Heart right ventricle (tissue), 16 donors: ENCODE measurements at regions of chr3 and their contacts with region 1.

Region 1: GRCh38 chr3:10224784-10225665 is 23.2 kb upstream of the TATDN2 start:
- DNase-seq: peak; percentile 53 to 74
- ATAC-seq: peak; percentile 72 to 93 (median 86)
- H3K4me3 ChIP-seq: no peak overlapping the region
- H3K27ac ChIP-seq: peak overlapping the region in 2 of 10 donors; percentile 20 to 42
- H3K4me1 ChIP-seq: peaks cover 0 to 54% (median 6%) of the 10 kb centered on the region in 9 donors
- H3K27me3 ChIP-seq: no peaks in the 10 kb centered on the region
- CTCF ChIP-seq: peak; percentile 62 to 86 (median 84)

Region 2: DNA sequence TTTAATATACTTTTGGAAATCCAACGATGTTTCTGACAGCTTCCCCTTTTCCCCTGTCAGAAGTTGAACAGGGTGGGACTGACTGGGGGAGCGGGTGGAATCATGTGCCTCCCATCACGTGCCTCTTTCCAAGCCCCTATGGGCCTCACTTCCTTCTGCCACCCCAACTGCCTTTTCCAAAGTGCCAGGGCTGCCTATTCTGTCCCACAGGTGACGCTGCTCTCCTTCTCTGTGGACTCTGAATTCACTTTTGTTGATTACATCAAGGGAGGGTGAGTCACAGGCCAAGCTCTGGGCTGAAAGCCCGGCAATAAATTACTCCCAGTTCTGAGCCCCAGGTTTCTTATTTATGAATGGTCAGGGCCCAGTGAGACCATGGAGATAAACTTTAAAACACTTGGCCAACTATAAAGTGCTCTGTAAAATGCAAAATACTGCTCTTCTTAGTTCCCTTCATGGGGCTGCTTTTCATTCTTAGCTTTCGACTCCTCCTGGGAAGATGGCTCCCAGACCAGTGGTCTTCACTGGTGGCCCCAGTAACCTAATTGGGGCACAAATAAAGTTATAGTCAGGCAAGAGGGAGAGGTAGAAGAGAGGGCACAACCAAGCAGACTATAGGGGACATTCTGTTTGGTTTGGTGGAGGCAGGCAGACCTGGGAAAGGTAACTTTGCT is 509.1 kb before region 1 on chr3:
- intact Hi-C with region 1: loop called in 1 of 10 experiments (anchors 10 kb)
- DNase-seq: peak; percentile 46 to 70
- ATAC-seq: peak; percentile 90 to 96 (median 92)
- H3K4me3 ChIP-seq: no peak overlapping the region
- H3K27ac ChIP-seq: peak overlapping the region in 2 of 10 donors; percentile 18 to 55
- H3K4me1 ChIP-seq: peaks cover 0 to 19% (median 0%) of the 10 kb centered on the region in 9 donors
- H3K27me3 ChIP-seq: no peaks in the 10 kb centered on the region
- CTCF ChIP-seq: peak; percentile 14 to 76 (median 57)

Region 3: DNA sequence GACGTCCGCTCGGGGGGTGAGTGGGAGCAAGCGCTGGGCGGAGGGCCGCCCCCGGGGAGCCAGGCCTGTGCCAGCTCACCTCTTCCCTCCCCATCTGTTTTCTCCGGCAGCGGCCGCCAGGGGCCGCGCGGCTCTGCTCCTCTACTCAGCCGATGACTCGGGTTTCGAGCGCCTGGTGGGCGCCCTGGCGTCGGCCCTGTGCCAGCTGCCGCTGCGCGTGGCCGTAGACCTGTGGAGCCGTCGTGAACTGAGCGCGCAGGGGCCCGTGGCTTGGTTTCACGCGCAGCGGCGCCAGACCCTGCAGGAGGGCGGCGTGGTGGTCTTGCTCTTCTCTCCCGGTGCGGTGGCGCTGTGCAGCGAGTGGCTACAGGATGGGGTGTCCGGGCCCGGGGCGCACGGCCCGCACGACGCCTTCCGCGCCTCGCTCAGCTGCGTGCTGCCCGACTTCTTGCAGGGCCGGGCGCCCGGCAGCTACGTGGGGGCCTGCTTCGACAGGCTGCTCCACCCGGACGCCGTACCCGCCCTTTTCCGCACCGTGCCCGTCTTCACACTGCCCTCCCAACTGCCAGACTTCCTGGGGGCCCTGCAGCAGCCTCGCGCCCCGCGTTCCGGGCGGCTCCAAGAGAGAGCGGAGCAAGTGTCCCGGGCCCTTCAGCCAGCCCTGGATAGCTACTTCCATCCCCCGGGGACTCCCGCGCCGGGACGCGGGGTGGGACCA is 292.0 kb before region 1 on chr3:
- intact Hi-C with region 1: loop called in 3 of 10 experiments (anchors 5 to 10 kb)
- DNase-seq: peak; percentile 80 to 85
- ATAC-seq: peak; percentile 76 to 89 (median 82)
- H3K4me3 ChIP-seq: peak overlapping the region; percentile 58 to 91 (median 76)
- H3K27ac ChIP-seq: peak overlapping the region; percentile 78 to 98 (median 96)
- H3K4me1 ChIP-seq: peaks cover 7 to 41% (median 30%) of the 10 kb centered on the region in 9 donors
- H3K27me3 ChIP-seq: no peaks in the 10 kb centered on the region
- CTCF ChIP-seq: peak; percentile 35 to 84 (median 69)

Region 4: DNA sequence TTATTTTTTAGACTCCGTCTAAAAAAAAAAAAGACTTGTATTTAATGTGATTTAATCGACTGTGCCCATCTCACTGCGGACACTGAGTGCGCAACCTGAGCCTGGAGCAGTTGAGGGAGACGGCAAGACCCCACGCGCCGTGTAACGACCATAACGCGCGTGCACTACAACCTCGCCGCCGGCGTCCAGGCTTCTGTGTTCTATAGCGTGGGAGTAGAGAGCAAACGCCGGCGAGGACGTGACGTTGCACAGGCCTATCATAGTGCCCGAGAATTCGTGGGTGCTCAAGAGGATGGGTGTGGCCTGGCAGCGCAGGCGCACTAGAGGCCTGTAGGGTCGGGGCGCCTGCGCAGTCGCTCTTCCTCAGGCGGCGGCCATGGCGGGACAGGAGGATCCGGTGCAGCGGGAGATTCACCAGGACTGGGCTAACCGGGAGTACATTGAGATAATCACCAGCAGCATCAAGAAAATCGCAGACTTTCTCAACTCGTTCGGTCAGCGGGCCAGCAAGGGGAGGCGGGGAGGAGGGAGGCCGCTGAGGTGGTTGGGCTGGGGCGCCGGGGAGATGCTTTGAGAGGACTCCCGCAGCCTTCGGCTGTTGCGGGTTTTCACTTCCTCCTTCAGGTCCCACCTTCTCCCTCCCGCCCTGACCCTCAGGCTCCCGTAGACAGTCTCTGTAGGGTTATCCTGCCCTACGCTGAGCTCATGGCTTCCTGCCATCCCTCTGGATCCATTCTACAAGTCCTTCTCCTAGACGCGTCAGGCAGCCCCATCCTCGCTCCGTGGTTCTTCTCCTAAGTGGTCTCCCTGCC is 109.5 kb before region 1 on chr3 and contains the start of gene BRK1:
- intact Hi-C with region 1: loop called in 1 of 10 experiments (anchors 5 kb)
- DNase-seq: peak; percentile 94 to 95
- ATAC-seq: peak; percentile 100
- H3K4me3 ChIP-seq: peak within 1 kb of the TSS; percentile 77 to 97 (median 84)
- H3K27ac ChIP-seq: peak within 1 kb of the TSS in 9 of 10 donors; percentile 66 to 90 (median 83)
- H3K4me1 ChIP-seq: peaks cover 3 to 44% (median 31%) of the 10 kb centered on the region in 9 donors
- H3K27me3 ChIP-seq: no peaks in the 10 kb centered on the region
- CTCF ChIP-seq: no peak
- total RNA-seq, gene BRK1: 80.3 to 101 (median 94.8) TPM

Region 5: DNA sequence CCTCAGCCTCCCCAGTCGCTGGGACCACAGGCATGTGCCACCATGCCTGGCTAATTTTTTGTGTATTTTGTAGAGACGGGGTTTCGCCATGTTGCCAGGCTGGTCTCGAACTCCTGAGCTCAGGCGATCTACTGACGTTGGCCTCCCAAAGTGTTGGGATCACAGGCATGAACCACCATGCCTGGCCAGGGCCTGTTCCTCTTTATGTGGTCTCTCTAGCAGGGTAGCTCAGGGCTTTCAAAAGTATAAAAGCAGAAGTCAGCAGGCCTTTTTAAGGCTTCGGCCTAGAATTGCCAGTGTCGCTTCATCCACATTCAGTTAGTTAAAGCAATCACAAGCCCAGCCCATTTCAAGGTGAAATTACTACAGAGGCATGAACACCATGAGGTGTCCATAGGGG is 75.8 kb before region 1 on chr3:
- intact Hi-C with region 1: loop called in 1 of 10 experiments (anchors 5 kb)
- DNase-seq: no peak
- ATAC-seq: peak in 1 of 8 donors; percentile 15
- H3K4me3 ChIP-seq: no peak overlapping the region
- H3K27ac ChIP-seq: peak overlapping the region in 1 of 10 donors; percentile 47
- H3K4me1 ChIP-seq: peaks cover 0 to 36% (median 16%) of the 10 kb centered on the region in 9 donors
- H3K27me3 ChIP-seq: no peaks in the 10 kb centered on the region
- CTCF ChIP-seq: no peak

Region 6: GRCh38 chr3:10164546-10165393 is 60.3 kb before region 1 on chr3 and contains the start of gene IRAK2:
- intact Hi-C with region 1: loop called in 8 of 10 experiments (anchors 2 to 10 kb)
- DNase-seq: peak; percentile 70 to 80
- ATAC-seq: peak; percentile 93 to 97 (median 95)
- H3K4me3 ChIP-seq: peak within 1 kb of the TSS; percentile 56 to 92 (median 82)
- H3K27ac ChIP-seq: peak within 1 kb of the TSS in 8 of 10 donors; percentile 3 to 89 (median 72)
- H3K4me1 ChIP-seq: peaks cover 0 to 27% (median 5%) of the 10 kb centered on the region in 9 donors
- H3K27me3 ChIP-seq: no peaks in the 10 kb centered on the region
- CTCF ChIP-seq: peak; percentile 86 to 98 (median 97)
- total RNA-seq, gene IRAK2: 0.92 to 3.6 (median 1.5) TPM

Region 7: GRCh38 chr3:10189557-10190354 is 35.3 kb before region 1 on chr3:
- intact Hi-C with region 1: loop called in 1 of 10 experiments (anchors 5 kb)
- DNase-seq: peak; percentile 86
- ATAC-seq: peak; percentile 46 to 77 (median 69)
- H3K4me3 ChIP-seq: peak overlapping the region in 1 of 10 donors; percentile 7
- H3K27ac ChIP-seq: peak overlapping the region in 9 of 10 donors; percentile 7 to 93 (median 61)
- H3K4me1 ChIP-seq: peaks cover 20 to 90% (median 71%) of the 10 kb centered on the region in 9 donors
- H3K27me3 ChIP-seq: no peaks in the 10 kb centered on the region
- CTCF ChIP-seq: peak in 1 of 9 donors; percentile 19